ENCODE measurements at regions of chr6 and their contacts with region 1.

Region 1: GRCh38 chr6:128979071-128979470 is 96.1 kb downstream of the LAMA2 start:
- DNase-seq: no peak
- ATAC-seq: no peak

Region 2: DNA sequence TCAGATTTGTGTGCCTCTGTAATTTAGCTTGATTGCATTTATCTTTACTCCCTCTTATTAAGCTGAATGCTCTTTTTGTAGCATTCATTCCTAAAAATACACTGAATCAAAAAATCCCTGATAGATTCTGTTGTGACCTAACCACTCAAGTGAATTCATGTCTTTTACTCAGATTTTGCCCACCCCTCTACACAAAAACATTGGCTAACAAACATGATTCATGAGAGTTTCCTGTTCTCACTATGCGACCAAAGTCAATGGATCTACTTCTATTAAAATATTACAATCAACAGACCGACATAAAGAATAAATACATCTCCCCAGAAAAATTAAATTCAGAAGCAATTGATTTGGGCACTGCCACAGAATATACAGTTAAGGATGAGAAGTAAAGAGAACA is 978.7 kb before region 1 on chr6:
- intact Hi-C with region 1: no loop called
- DNase-seq: no peak
- ATAC-seq: no peak

Region 3: GRCh38 chr6:128598565-128598964 is 380.5 kb before region 1 on chr6:
- intact Hi-C with region 1: loop called (anchors 10 kb)
- DNase-seq: no peak
- ATAC-seq: no peak

Region 4: DNA sequence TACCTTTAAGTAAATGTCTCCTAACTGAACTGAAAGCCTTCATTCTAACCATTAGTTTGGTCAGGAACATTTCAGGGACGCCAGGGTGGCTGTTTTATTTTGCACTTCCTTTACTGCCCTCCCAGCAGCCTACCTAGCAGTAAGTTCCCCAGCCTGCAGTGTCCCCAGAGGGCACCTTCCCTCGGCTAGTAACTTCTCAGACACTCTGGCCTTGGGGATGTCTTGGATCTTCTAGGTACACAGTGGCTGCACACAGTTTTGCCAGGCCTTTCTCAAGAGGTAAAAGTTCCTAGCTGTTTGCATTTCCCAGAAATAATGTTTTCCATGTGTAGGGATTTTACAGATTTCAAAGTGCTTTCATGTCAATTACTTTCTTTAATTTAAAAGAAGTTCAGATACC is 96.5 kb before region 1 on chr6:
- intact Hi-C with region 1: no loop called
- DNase-seq: no peak
- ATAC-seq: peak; percentile 53